ENCODE measurements at regions of chr10 and their contacts with region 1.

Region 1: GRCh38 chr10:52390388-52390787 is 76.3 kb downstream of the DKK1 start:
- DNase-seq: no peak
- ATAC-seq: no peak
- H3K4me3 ChIP-seq: no peak overlapping the region
- H3K27ac ChIP-seq: no peak overlapping the region
- H3K4me1 ChIP-seq: peaks cover 4 to 8% of the 10 kb centered on the region in 2 experiments; a peak in 3 of 4 replicates
- H3K27me3 ChIP-seq: no peaks in the 10 kb centered on the region
- CTCF ChIP-seq: no peak
- POLR2A ChIP-seq: no peak
- RAD21 ChIP-seq: no peak

Region 2: DNA sequence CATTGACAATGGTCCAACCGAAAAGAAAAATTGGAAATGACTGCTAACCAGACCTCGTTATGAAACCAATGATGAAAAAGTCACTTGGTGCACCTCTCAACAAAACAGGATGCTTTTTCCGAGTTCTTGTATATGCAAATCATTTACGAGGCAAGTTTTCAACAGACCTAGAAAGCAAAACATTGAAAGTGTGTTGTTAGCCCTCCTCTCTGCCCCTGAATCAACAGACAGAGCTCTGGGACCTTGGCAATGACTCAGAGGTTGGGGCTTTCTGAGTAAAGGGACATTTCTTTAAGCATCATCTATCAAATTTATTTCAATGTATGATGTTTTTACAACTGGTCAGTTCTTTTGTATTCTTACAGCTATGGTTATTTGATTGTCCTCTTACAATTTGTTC is 92.6 kb before region 1 on chr10:
- CTCF ChIA-PET with region 1: no interaction called
- POLR2A ChIA-PET with region 1: no interaction called
- RAD21 ChIA-PET with region 1: no interaction called
- intact Hi-C with region 1: no loop called
- DNase-seq: no peak
- ATAC-seq: no peak
- H3K4me3 ChIP-seq: no peak overlapping the region
- H3K27ac ChIP-seq: no peak overlapping the region
- H3K4me1 ChIP-seq: no peaks in the 10 kb centered on the region
- H3K27me3 ChIP-seq: no peaks in the 10 kb centered on the region
- CTCF ChIP-seq: no peak
- POLR2A ChIP-seq: no peak
- RAD21 ChIP-seq: no peak

Region 3: DNA sequence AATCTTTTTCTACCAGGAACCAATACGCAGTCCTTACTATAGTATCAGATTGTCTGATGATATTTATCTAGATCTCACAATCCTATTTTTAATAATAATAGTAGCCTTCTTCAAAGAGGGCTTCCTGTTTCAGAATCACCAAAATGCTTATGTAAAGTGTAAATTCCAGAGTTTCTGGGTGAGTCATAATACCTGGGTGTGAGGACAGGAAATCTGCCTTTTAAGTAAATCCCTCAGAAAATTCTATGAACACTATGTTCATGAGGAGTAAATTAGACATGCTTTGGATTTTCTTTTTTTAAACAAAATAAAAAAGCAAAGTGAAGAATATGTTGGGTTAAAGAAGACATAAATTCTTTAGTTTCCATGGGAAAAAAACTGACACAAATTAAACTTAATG is 55.8 kb before region 1 on chr10:
- CTCF ChIA-PET with region 1: no interaction called
- POLR2A ChIA-PET with region 1: no interaction called
- RAD21 ChIA-PET with region 1: no interaction called
- intact Hi-C with region 1: loop called (anchors 10 kb)
- DNase-seq: no peak
- ATAC-seq: peak; percentile 52; the same call in 1 of the 2 replicates
- H3K4me3 ChIP-seq: no peak overlapping the region
- H3K27ac ChIP-seq: peak overlapping the region; percentile 56; the same call in 1 of the 2 replicates
- H3K4me1 ChIP-seq: peaks cover 22 to 27% of the 10 kb centered on the region in 2 experiments
- H3K27me3 ChIP-seq: no peaks in the 10 kb centered on the region
- CTCF ChIP-seq: no peak
- POLR2A ChIP-seq: no peak
- RAD21 ChIP-seq: no peak

Measured in HCT116 (cell line).